A673 (cell line): ENCODE measurements at regions of chr2 and their contacts with region 1.

Region 1: DNA sequence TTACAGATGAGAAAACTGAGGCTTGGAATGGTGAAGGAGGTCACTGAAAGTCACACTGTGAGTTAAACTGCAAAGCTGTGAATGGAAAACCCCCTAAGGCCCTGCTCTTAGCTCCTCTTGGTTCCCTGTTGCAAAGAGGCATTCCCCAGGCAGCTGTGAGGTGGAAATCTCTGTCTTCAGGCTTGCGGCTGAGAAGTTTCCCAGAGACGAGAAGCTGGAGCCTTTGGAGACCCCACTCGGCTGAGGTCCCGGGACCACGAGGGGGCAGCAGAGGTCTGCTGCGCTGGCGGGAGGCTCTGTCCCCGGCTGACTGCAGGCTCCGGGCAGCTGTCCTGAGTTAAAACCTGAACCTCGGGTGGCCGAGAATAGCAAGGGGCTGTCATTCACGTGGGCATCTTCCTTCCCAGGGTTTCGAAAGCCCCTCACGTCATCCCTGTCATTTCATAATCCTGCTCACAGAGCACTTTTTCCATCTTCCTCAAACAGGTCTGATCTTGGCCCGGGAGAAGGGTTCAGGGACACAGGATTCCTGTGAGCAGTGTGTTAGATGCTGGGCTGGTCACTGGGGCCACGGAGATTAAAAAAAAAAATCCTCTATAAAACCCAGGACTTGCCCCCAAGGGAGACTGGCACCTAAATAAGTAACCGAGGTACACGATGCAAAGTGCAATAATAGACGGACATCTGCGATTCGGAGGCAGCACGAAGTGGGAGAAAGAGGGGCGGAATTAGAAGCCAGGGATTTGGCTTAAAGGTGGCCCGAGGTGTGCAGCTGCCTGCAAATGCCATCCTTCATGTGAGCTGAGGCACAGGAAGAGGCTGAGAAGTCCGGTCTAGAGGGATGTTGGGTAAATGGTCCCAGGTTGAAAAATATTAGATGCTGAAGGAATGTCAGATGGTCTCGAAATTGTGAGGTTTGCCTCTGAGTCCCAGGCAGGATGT is 24.6 kb upstream of the ATOH8 start:
- DNase-seq: peak; percentile 85
- H3K4me3 ChIP-seq: no peak overlapping the region
- H3K27ac ChIP-seq: no peak overlapping the region
- H3K4me1 ChIP-seq: no peaks in the 10 kb centered on the region
- H3K27me3 ChIP-seq: no peaks in the 10 kb centered on the region
- CTCF ChIP-seq: peak; percentile 97

Region 2: DNA sequence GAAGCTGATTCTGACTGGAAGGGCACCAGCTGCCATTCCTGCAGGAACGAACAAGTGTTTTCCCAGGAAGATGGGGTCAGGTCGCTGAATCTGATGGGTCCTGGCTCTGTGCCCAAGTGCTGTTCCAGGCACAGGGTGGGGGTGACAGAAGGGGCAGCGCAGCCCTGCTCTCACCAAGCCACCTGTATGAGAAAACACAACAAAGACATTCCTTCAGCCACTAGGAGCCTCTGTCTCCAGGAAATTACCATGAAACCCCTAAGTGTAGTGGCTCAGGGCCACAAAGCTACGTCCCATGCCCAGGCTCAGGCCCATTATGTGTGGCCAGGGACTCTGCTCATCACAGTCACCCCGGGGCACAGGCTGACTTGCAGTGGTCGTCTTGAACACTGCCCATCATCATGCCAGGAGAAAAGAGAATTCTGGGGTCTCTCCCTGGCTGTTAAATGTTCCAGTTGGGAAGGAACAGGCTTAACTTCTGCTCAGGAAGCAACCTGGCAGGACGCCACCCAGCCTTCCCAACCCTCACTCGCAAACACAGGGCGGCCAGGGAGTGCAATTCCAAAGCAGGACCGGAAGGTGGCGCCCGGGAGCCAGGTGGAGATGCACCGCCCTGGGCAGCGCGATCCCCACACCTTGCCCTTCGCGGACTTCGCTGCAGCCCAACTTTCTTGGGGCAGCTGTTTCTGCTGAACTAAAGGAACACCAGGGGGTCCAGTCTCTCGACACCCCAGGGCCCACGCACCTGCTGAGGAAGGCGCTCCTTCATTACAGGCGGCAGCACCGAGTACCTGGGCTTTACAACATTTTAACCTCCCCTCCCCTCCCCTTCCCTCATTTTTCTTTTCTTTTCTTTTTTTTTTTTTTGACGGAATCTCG is 50.1 kb before region 1 on chr2:
- CTCF ChIA-PET with region 1: interaction called, 15 read pairs
- POLR2A ChIA-PET with region 1: no interaction called
- intact Hi-C with region 1: no loop called
- DNase-seq: peak; percentile 87
- H3K4me3 ChIP-seq: no peak overlapping the region
- H3K27ac ChIP-seq: no peak overlapping the region
- H3K4me1 ChIP-seq: no peaks in the 10 kb centered on the region
- H3K27me3 ChIP-seq: no peaks in the 10 kb centered on the region
- CTCF ChIP-seq: peak; percentile 97

Region 3: DNA sequence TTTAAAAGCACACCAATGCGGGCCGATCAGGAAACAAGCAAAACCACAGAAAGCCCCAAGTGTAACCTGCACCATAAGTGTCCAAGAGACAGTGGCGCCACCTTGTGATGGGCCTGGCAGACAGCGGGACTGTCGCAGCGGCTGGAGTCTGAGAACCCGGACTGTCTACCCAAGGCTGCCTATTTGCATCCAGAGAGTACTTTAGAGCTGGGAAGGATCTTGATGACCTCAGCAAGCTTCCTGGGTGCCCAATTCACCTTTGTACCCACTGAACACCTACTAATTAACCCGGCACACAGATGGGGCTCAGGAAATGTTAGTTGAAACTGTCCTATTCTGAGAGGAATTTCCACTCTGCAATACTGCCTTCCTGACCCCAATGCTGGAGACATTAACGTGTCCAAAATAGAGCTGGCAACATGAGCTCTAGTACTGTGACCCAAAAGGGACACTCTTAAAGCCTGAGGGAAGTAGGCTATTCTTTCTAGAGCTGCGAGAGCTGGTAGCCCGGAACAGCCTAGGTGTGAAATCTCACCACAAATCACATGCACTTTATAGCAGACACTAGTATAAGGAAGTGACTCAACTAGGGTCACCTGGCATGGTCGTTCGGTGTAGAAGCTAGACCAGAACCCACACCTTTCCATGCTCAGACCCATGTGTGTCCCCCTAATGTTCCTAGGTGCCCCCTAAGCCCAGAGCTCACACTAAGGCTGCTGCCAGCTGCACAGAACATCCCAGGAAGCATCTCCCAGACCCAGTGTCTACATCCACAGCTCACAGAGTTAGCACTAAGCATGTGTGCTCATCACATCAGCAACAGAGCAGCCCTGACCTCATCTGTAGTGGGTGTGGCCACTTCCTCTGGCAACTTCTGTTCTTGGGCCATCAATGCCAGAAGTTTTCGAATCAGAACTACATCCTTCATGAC is 351.1 kb after region 1 on chr2:
- CTCF ChIA-PET with region 1: no interaction called
- POLR2A ChIA-PET with region 1: no interaction called
- intact Hi-C with region 1: loop called (anchors 5 kb)
- DNase-seq: peak; percentile 78
- H3K4me3 ChIP-seq: no peak overlapping the region
- H3K27ac ChIP-seq: no peak overlapping the region
- H3K4me1 ChIP-seq: no peaks in the 10 kb centered on the region
- H3K27me3 ChIP-seq: no peaks in the 10 kb centered on the region
- CTCF ChIP-seq: peak; percentile 92